CD8-positive, alpha-beta T cell (primary cell): ENCODE measurements at regions of chr15 and their contacts with region 1.

Region 1: GRCh38 chr15:63466378-63467192 is 37.8 kb upstream of the USP3 start:
- DNase-seq: peak in 7 of 9 experiments; percentile 41 to 88 (median 61)
- ATAC-seq: peak; percentile 90
- H3K4me3 ChIP-seq: no peak overlapping the region
- H3K4me3 Mint-ChIP-seq: no peak overlapping the region
- H3K27ac ChIP-seq: no peak overlapping the region
- H3K27ac Mint-ChIP-seq: peak overlapping the region; percentile 9
- H3K4me1 ChIP-seq: peaks cover 8% of the 10 kb centered on the region
- H3K4me1 Mint-ChIP-seq: peaks cover 21% of the 10 kb centered on the region
- H3K27me3 ChIP-seq: no peaks in the 10 kb centered on the region
- H3K27me3 Mint-ChIP-seq: no peaks in the 10 kb centered on the region
- CTCF ChIP-seq: peak; percentile 66

Region 2: DNA sequence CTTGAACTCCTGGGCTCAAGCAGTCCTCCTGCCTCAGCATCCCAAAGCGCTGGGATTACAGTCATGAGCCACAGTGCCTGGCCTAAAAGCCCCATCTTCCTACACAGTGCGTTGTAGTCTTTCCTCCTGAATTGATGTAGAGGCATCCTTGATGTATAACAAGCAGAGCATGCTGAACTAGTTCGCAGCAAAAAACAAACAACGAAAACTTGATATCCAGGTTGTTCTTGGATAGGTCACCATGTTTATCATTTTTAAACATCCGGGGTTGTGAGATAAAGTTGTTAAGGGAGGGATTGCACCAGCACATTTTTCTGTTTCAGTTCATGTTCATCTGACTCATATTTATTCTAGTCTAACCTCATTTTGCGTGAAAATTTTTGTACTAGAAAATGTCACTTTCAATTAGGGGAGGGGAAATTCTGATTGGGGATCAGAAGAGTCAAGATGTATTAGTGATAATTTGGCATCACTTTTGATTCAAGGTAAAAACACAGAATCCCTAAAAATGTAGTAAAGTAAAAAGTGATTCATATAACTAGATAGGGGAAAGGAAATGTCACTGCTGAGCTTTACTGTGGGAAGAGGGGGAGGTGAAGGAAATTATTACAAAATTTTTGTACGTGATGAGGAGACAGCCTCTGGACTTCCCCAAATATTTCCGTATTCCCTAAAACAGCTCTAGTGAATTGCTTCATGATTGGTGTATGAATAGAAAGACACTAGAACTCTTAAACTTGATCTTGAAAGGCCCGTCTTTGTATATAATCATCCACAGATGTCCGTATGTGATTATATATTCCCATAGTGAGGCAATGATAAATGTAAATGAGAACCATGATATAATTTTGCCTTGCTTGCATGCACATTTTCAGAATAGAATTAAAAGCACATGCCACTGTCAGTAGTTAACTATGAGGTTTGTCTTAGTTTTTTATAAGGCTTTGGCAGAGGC is 254.3 kb before region 1 on chr15:
- CTCF ChIA-PET with region 1: no interaction called
- POLR2A ChIA-PET with region 1: no interaction called
- intact Hi-C with region 1: no loop called
- DNase-seq: peak in 1 of 9 experiments; percentile 56
- ATAC-seq: peak; percentile 45
- H3K4me3 ChIP-seq: no peak overlapping the region
- H3K4me3 Mint-ChIP-seq: peak overlapping the region; percentile 1
- H3K27ac ChIP-seq: peak overlapping the region in 1 of 2 experiments; percentile 63
- H3K27ac Mint-ChIP-seq: peak overlapping the region; percentile 82
- H3K4me1 ChIP-seq: peaks cover 49% of the 10 kb centered on the region
- H3K4me1 Mint-ChIP-seq: peaks cover 73% of the 10 kb centered on the region
- H3K27me3 ChIP-seq: no peaks in the 10 kb centered on the region
- H3K27me3 Mint-ChIP-seq: no peaks in the 10 kb centered on the region
- CTCF ChIP-seq: no peak

Region 3: GRCh38 chr15:63436872-63437375 is 29.7 kb before region 1 on chr15:
- CTCF ChIA-PET with region 1: interaction called, 11 read pairs
- POLR2A ChIA-PET with region 1: no interaction called
- intact Hi-C with region 1: no loop called
- DNase-seq: peak; percentile 48 to 90 (median 80)
- ATAC-seq: peak; percentile 84
- H3K4me3 ChIP-seq: peak overlapping the region in 1 of 2 experiments; percentile 15
- H3K4me3 Mint-ChIP-seq: peak overlapping the region; percentile 50
- H3K27ac ChIP-seq: peak overlapping the region; percentile 22 to 63
- H3K27ac Mint-ChIP-seq: peak overlapping the region; percentile 96
- H3K4me1 ChIP-seq: peaks cover 19% of the 10 kb centered on the region
- H3K4me1 Mint-ChIP-seq: peaks cover 47% of the 10 kb centered on the region
- H3K27me3 ChIP-seq: no peaks in the 10 kb centered on the region
- H3K27me3 Mint-ChIP-seq: no peaks in the 10 kb centered on the region
- CTCF ChIP-seq: no peak

Region 4: GRCh38 chr15:63487076-63487757 is 20.6 kb after region 1 on chr15:
- CTCF ChIA-PET with region 1: interaction called, 28 read pairs
- POLR2A ChIA-PET with region 1: interaction called, 3 read pairs
- intact Hi-C with region 1: loop called in 1 of 2 experiments (anchors 2 kb)
- DNase-seq: peak; percentile 83 to 95 (median 88)
- ATAC-seq: peak; percentile 97
- H3K4me3 ChIP-seq: no peak overlapping the region
- H3K4me3 Mint-ChIP-seq: peak overlapping the region; percentile 40
- H3K27ac ChIP-seq: no peak overlapping the region
- H3K27ac Mint-ChIP-seq: peak overlapping the region; percentile 80
- H3K4me1 ChIP-seq: peaks cover 48% of the 10 kb centered on the region
- H3K4me1 Mint-ChIP-seq: peaks cover 62% of the 10 kb centered on the region
- H3K27me3 ChIP-seq: no peaks in the 10 kb centered on the region
- H3K27me3 Mint-ChIP-seq: no peaks in the 10 kb centered on the region
- CTCF ChIP-seq: peak; percentile 98

Region 5: GRCh38 chr15:63514531-63514943 is 48.0 kb after region 1 on chr15:
- CTCF ChIA-PET with region 1: interaction called, 11 read pairs
- POLR2A ChIA-PET with region 1: interaction called, 5 read pairs
- intact Hi-C with region 1: no loop called
- DNase-seq: peak in 1 of 9 experiments; percentile 31
- ATAC-seq: no peak
- H3K4me3 ChIP-seq: no peak overlapping the region
- H3K4me3 Mint-ChIP-seq: peak overlapping the region; percentile 26
- H3K27ac ChIP-seq: no peak overlapping the region
- H3K27ac Mint-ChIP-seq: peak overlapping the region; percentile 22
- H3K4me1 ChIP-seq: peaks cover 96% of the 10 kb centered on the region
- H3K4me1 Mint-ChIP-seq: peaks cover 90% of the 10 kb centered on the region
- H3K27me3 ChIP-seq: no peaks in the 10 kb centered on the region
- H3K27me3 Mint-ChIP-seq: no peaks in the 10 kb centered on the region
- CTCF ChIP-seq: no peak

Region 6: GRCh38 chr15:63565536-63566186 is 99.1 kb after region 1 on chr15:
- CTCF ChIA-PET with region 1: interaction called, 7 read pairs
- POLR2A ChIA-PET with region 1: no interaction called
- intact Hi-C with region 1: loop called in 1 of 2 experiments (anchors 2 kb)
- DNase-seq: no peak
- ATAC-seq: no peak
- H3K4me3 ChIP-seq: no peak overlapping the region
- H3K4me3 Mint-ChIP-seq: no peak overlapping the region
- H3K27ac ChIP-seq: no peak overlapping the region
- H3K27ac Mint-ChIP-seq: peak overlapping the region; percentile 15
- H3K4me1 ChIP-seq: no peaks in the 10 kb centered on the region
- H3K4me1 Mint-ChIP-seq: peaks cover 8% of the 10 kb centered on the region
- H3K27me3 ChIP-seq: no peaks in the 10 kb centered on the region
- H3K27me3 Mint-ChIP-seq: no peaks in the 10 kb centered on the region
- CTCF ChIP-seq: no peak

Region 7: GRCh38 chr15:63600616-63601025 is 134.0 kb after region 1 on chr15:
- CTCF ChIA-PET with region 1: interaction called, 48 read pairs
- POLR2A ChIA-PET with region 1: interaction called, 10 read pairs
- intact Hi-C with region 1: loop called (anchors 2 to 5 kb)
- DNase-seq: peak; percentile 79 to 98 (median 90)
- ATAC-seq: peak; percentile 80
- H3K4me3 ChIP-seq: peak overlapping the region; percentile 87 to 96
- H3K4me3 Mint-ChIP-seq: peak overlapping the region; percentile 94
- H3K27ac ChIP-seq: peak overlapping the region; percentile 75 to 87
- H3K27ac Mint-ChIP-seq: peak overlapping the region; percentile 94
- H3K4me1 ChIP-seq: peaks cover 29% of the 10 kb centered on the region
- H3K4me1 Mint-ChIP-seq: peaks cover 56% of the 10 kb centered on the region
- H3K27me3 ChIP-seq: no peaks in the 10 kb centered on the region
- H3K27me3 Mint-ChIP-seq: no peaks in the 10 kb centered on the region
- CTCF ChIP-seq: no peak

Region 8: GRCh38 chr15:63615935-63616334 is 149.3 kb after region 1 on chr15:
- CTCF ChIA-PET with region 1: no interaction called
- POLR2A ChIA-PET with region 1: no interaction called
- intact Hi-C with region 1: no loop called
- DNase-seq: no peak
- ATAC-seq: no peak
- H3K4me3 ChIP-seq: no peak overlapping the region
- H3K4me3 Mint-ChIP-seq: no peak overlapping the region
- H3K27ac ChIP-seq: no peak overlapping the region
- H3K27ac Mint-ChIP-seq: no peak overlapping the region
- H3K4me1 ChIP-seq: peaks cover 1% of the 10 kb centered on the region
- H3K4me1 Mint-ChIP-seq: peaks cover 14% of the 10 kb centered on the region
- H3K27me3 ChIP-seq: no peaks in the 10 kb centered on the region
- H3K27me3 Mint-ChIP-seq: no peaks in the 10 kb centered on the region
- CTCF ChIP-seq: no peak

Region 9: DNA sequence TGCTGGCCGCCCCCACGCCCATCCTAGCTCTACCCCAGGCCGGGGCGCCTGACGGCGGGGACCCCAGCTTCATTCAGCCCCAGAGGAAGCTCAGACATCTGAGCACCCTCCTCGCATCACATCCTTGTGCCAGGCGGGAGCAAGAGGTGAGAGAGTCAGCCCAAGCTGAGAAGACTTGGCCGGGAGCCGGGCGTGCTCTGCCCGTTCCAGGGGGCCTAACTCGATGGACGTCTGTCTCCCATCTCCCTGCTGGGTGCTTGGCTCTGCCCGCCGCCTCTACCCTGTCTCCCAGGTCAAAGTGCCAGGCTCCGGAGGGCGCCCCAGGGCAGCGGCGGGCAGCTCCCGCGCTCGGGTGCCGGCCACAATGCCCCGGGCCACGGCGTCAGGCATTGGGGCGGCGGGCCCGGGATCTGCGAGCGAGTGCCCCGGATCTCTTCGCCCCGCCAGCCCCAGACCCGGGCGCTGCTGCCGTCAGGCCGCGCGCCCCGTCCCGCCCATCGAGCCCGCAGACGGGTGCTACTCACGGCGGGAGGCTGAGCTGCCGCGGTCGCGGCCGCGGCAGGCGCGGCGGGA is 579.3 kb after region 1 on chr15:
- CTCF ChIA-PET with region 1: no interaction called
- POLR2A ChIA-PET with region 1: no interaction called
- intact Hi-C with region 1: no loop called
- DNase-seq: peak in 2 of 9 experiments; percentile 15 to 24
- ATAC-seq: peak; percentile 52
- H3K4me3 ChIP-seq: peak overlapping the region; percentile 26 to 29
- H3K4me3 Mint-ChIP-seq: peak overlapping the region; percentile 78
- H3K27ac ChIP-seq: no peak overlapping the region
- H3K27ac Mint-ChIP-seq: no peak overlapping the region
- H3K4me1 ChIP-seq: peaks cover 6% of the 10 kb centered on the region
- H3K4me1 Mint-ChIP-seq: peaks cover 10% of the 10 kb centered on the region
- H3K27me3 ChIP-seq: peaks cover 0 to 4% of the 10 kb centered on the region in 2 experiments
- H3K27me3 Mint-ChIP-seq: peaks cover 2% of the 10 kb centered on the region
- CTCF ChIP-seq: no peak